CD8-positive, alpha-beta T cell (primary cell): ENCODE measurements at regions of chr16 and their contacts with region 1.

Region 1: GRCh38 chr16:2194852-2195321 is 1.5 kb downstream of the CASKIN1 start:
- DNase-seq: peak in 8 of 9 experiments; percentile 23 to 79 (median 59)
- ATAC-seq: peak; percentile 70
- H3K4me3 ChIP-seq: no peak overlapping the region
- H3K4me3 Mint-ChIP-seq: peak overlapping the region; percentile 63
- H3K27ac ChIP-seq: no peak overlapping the region
- H3K27ac Mint-ChIP-seq: no peak overlapping the region
- H3K4me1 ChIP-seq: peaks cover 11% of the 10 kb centered on the region
- H3K4me1 Mint-ChIP-seq: peaks cover 5% of the 10 kb centered on the region
- H3K27me3 ChIP-seq: peaks cover 16 to 21% of the 10 kb centered on the region in 2 experiments
- H3K27me3 Mint-ChIP-seq: peaks cover 23% of the 10 kb centered on the region
- CTCF ChIP-seq: peak; percentile 25

Region 2: GRCh38 chr16:1509307-1510221 is 685.3 kb before region 1 on chr16:
- CTCF ChIA-PET with region 1: no interaction called
- POLR2A ChIA-PET with region 1: no interaction called
- intact Hi-C with region 1: no loop called
- DNase-seq: peak in 1 of 9 experiments; percentile 11
- ATAC-seq: no peak
- H3K4me3 ChIP-seq: no peak overlapping the region
- H3K4me3 Mint-ChIP-seq: no peak overlapping the region
- H3K27ac ChIP-seq: no peak overlapping the region
- H3K27ac Mint-ChIP-seq: no peak overlapping the region
- H3K4me1 ChIP-seq: no peaks in the 10 kb centered on the region
- H3K4me1 Mint-ChIP-seq: no peaks in the 10 kb centered on the region
- H3K27me3 ChIP-seq: no peaks in the 10 kb centered on the region
- H3K27me3 Mint-ChIP-seq: no peaks in the 10 kb centered on the region
- CTCF ChIP-seq: no peak

Region 3: GRCh38 chr16:2213817-2214720 is 19.2 kb after region 1 on chr16:
- CTCF ChIA-PET with region 1: no interaction called
- POLR2A ChIA-PET with region 1: interaction called, 11 read pairs
- intact Hi-C with region 1: no loop called
- DNase-seq: no peak
- ATAC-seq: no peak
- H3K4me3 ChIP-seq: peak overlapping the region; percentile 24 to 70
- H3K4me3 Mint-ChIP-seq: peak overlapping the region; percentile 78
- H3K27ac ChIP-seq: peak overlapping the region in 1 of 2 experiments; percentile 47
- H3K27ac Mint-ChIP-seq: no peak overlapping the region
- H3K4me1 ChIP-seq: peaks cover 14% of the 10 kb centered on the region
- H3K4me1 Mint-ChIP-seq: peaks cover 13% of the 10 kb centered on the region
- H3K27me3 ChIP-seq: no peaks in the 10 kb centered on the region
- H3K27me3 Mint-ChIP-seq: no peaks in the 10 kb centered on the region
- CTCF ChIP-seq: no peak

Region 4: DNA sequence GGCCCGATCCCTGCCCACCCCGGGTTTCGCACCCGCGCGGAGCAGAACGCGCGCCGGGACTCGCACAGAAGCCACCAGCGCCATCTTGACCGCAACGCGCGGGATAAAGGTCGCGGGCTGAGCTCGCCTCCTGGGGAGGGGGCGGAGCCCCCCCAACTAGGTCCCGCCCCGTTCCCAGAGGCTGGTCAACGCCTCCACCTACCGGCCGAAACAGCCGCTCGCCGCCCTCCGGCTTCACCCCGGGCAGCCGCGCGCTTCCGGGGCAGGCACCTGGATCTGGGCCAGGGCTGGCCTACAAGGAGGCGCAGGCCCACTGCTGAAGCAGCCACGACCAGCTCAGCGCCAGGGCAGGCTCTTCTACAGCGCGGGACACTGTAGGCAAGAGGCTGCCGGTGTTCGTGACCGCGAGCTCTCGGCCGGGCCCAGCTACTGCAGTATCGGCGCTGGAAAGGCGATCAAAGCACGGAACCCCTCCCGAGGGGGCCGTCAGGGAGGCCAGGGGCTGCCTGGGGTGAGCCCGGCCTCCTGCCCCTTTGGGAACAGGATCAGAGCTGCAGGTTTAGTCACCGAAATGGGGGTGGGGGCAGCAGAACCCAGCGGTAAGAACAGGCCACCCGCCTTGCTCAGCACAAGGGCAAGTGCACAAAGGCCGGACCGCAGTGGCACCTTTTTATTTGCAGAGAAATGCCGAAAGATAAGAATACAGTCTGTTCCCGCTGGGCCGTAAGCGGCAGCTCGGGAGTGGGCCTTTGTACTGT is 56.8 kb after region 1 on chr16 and contains the start of gene ECI1:
- CTCF ChIA-PET with region 1: interaction called, 24 read pairs
- POLR2A ChIA-PET with region 1: interaction called, 5 read pairs
- intact Hi-C with region 1: loop called in 1 of 2 experiments (anchors 1 kb)
- DNase-seq: peak; percentile 50 to 89 (median 80)
- ATAC-seq: peak; percentile 70
- H3K4me3 ChIP-seq: peak within 1 kb of the TSS; percentile 57 to 64
- H3K4me3 Mint-ChIP-seq: peak within 1 kb of the TSS; percentile 85
- H3K27ac ChIP-seq: peak within 1 kb of the TSS; percentile 64 to 81
- H3K27ac Mint-ChIP-seq: peak within 1 kb of the TSS; percentile 90
- H3K4me1 ChIP-seq: peaks cover 8% of the 10 kb centered on the region
- H3K4me1 Mint-ChIP-seq: peaks cover 10% of the 10 kb centered on the region
- H3K27me3 ChIP-seq: no peaks in the 10 kb centered on the region
- H3K27me3 Mint-ChIP-seq: no peaks in the 10 kb centered on the region
- CTCF ChIP-seq: no peak
- total RNA-seq, gene ECI1: 10.6 to 11.0 TPM

Region 5: DNA sequence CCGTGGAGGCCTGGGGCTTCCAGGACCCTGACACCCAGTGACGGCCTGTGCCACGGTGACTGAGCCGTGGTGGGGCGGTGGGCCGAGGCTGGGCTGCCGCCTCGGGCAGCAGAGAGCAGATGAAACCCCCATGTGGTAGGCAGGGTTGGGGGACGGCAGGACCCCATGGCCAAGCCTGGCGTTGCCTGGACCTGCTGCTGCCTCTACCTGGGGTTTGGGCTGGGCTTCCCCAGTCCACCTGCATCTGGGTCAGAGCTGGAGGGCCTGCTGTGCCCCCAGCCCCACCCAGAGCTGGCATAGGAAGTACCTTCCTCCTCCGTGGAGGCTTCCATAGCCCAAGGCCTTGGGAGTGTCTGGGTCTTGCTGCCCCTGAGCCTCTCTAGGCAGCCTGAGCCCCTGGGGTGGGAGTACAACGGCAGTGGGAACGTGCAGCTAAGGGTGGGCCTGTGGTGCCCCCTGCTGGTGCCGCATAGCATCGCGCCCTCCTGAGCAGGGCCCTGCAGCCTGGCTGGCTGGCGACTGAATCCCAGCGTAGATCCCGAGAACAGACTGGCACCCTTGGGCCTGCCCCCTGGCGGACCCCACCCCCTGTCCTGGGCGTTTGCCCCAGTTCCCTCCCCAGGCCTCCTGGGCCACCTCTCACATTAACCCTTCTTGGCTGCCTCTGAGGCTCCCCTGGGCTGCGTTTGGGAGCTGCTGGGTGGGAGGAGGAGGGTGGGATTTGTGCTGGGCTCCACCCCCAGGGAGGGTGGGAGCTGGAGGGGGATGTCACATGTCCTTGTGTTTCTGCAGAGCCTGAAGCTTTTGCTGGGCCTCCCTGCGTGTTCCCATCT is 306.2 kb after region 1 on chr16:
- CTCF ChIA-PET with region 1: interaction called, 38 read pairs
- POLR2A ChIA-PET with region 1: interaction called, 3 read pairs
- intact Hi-C with region 1: loop called (anchors 1 kb)
- DNase-seq: peak; percentile 67 to 89 (median 80)
- ATAC-seq: peak; percentile 100
- H3K4me3 ChIP-seq: no peak overlapping the region
- H3K4me3 Mint-ChIP-seq: no peak overlapping the region
- H3K27ac ChIP-seq: no peak overlapping the region
- H3K27ac Mint-ChIP-seq: no peak overlapping the region
- H3K4me1 ChIP-seq: peaks cover 6% of the 10 kb centered on the region
- H3K4me1 Mint-ChIP-seq: peaks cover 2% of the 10 kb centered on the region
- H3K27me3 ChIP-seq: no peaks in the 10 kb centered on the region
- H3K27me3 Mint-ChIP-seq: no peaks in the 10 kb centered on the region
- CTCF ChIP-seq: peak; percentile 87